SK-N-SH (cell line): ENCODE measurements at regions of chr12 and their contacts with region 1.

Region 1: DNA sequence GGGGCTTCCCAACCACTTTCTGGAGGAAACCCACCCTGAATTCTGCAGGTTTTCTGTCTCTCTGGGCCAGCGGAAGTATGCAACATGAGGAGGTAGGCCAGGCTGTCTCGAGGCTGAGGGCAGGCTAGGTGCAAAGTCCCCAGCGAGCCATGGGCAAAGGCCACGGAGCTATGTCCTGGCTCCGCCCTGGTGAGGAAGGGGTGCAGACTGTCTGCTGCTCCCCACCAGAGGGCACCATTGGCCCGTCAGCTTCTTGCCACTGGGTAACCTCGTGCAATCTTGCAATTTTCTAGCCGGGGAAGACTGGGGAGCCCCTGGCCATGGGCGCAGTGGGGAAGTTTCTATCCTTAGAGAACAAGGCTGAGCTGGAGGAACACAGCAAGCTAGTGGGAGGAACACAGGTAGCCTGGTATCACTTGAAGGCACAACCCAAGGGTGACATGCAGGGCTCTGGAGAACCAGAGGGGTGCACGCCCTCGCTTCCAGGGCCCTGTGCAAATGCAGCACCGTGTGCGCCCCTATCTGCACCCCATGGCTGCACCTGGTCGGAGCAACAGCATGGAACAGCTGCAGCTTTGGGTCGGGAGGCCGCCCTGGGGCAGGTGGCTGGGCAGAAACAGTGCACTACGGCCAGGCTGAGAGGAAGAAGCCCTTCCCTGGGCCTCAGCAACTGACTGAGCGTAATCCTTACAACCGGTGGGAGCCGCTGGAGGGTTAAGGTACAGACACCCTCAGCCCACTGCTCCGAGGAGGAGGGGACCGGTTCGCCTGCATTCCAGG is 27.6 kb upstream of the RPLP0 start:
- DNase-seq: peak; percentile 91
- H3K4me3 ChIP-seq: peak overlapping the region in 1 of 2 experiments; percentile 44; a peak in 1 of 4 replicates
- H3K27ac ChIP-seq: peak overlapping the region; percentile 95 to 100; a peak in 3 of 4 replicates
- H3K4me1 ChIP-seq: peaks cover 58 to 74% of the 10 kb centered on the region in 2 experiments
- H3K27me3 ChIP-seq: no peaks in the 10 kb centered on the region
- CTCF ChIP-seq: peak; percentile 90
- EP300 ChIP-seq: no peak
- RAD21 ChIP-seq: peak; percentile 97

Region 2: GRCh38 chr12:119925269-119925668 is 303.2 kb before region 1 on chr12:
- CTCF ChIA-PET with region 1: no interaction called
- POLR2A ChIA-PET with region 1: no interaction called
- DNase-seq: no peak
- H3K4me3 ChIP-seq: no peak overlapping the region
- H3K27ac ChIP-seq: no peak overlapping the region
- H3K4me1 ChIP-seq: no peaks in the 10 kb centered on the region
- H3K27me3 ChIP-seq: no peaks in the 10 kb centered on the region; the same call in 1 of the 2 replicates
- CTCF ChIP-seq: no peak
- EP300 ChIP-seq: no peak
- RAD21 ChIP-seq: no peak

Region 3: DNA sequence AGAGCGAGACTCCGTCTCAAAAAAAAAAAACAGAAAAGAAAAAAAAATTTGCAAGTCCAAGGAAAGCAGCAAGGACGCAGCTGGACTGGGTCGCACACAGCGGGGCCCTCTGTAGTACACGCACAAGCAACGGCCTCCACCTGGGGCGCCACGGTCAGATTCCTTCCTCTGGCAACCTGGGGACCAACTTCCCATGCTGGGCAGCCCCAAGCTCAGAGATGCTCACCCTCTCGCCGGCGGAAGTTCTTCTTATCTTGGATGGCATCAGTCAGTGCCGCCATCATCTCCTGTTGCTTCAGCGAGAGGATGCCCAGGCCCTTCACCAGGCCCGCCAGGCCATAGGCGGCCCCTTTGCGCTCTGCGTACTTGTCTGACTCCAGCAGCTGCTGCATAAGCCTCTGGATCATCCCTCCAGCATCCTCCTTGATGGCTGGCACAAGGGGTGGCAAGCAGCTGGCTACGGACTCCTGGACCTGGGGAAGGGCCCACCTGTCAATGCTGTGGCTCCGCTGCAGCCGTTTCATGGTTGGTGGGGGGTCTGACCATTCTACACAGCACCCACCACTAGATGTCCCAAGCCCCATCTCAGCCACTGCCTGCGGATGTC is 77.5 kb before region 1 on chr12:
- CTCF ChIA-PET with region 1: no interaction called
- POLR2A ChIA-PET with region 1: no interaction called
- DNase-seq: no peak
- H3K4me3 ChIP-seq: no peak overlapping the region
- H3K27ac ChIP-seq: no peak overlapping the region
- H3K4me1 ChIP-seq: no peaks in the 10 kb centered on the region
- H3K27me3 ChIP-seq: no peaks in the 10 kb centered on the region
- CTCF ChIP-seq: no peak
- EP300 ChIP-seq: no peak
- RAD21 ChIP-seq: no peak

Region 4: GRCh38 chr12:120216742-120217605 is 11.5 kb before region 1 on chr12:
- CTCF ChIA-PET with region 1: interaction called, 116 read pairs
- POLR2A ChIA-PET with region 1: interaction called, 7 read pairs
- DNase-seq: peak; percentile 62
- H3K4me3 ChIP-seq: no peak overlapping the region
- H3K27ac ChIP-seq: no peak overlapping the region
- H3K4me1 ChIP-seq: no peaks in the 10 kb centered on the region
- H3K27me3 ChIP-seq: no peaks in the 10 kb centered on the region
- CTCF ChIP-seq: no peak
- EP300 ChIP-seq: no peak
- RAD21 ChIP-seq: no peak

Region 5: GRCh38 chr12:120265473-120266179 is 37.1 kb after region 1 on chr12 and contains the start of gene PXN:
- CTCF ChIA-PET with region 1: interaction called, 618 read pairs
- POLR2A ChIA-PET with region 1: interaction called, 22 read pairs
- DNase-seq: peak; percentile 100
- H3K4me3 ChIP-seq: peak within 1 kb of the TSS; percentile 73 to 83
- H3K27ac ChIP-seq: peak within 1 kb of the TSS; percentile 51 to 57; a peak in 2 of 4 replicates
- H3K4me1 ChIP-seq: peaks cover 22 to 27% of the 10 kb centered on the region in 2 experiments; a peak in 3 of 4 replicates
- H3K27me3 ChIP-seq: no peaks in the 10 kb centered on the region
- CTCF ChIP-seq: peak; percentile 73
- EP300 ChIP-seq: no peak
- RAD21 ChIP-seq: peak; percentile 87
- polyA plus RNA-seq, gene PXN: 63.0 and 89.0 TPM in 2 replicates

Region 6: GRCh38 chr12:120286796-120287465 is 58.5 kb after region 1 on chr12:
- CTCF ChIA-PET with region 1: interaction called, 25 read pairs
- POLR2A ChIA-PET with region 1: interaction called, 108 read pairs
- DNase-seq: no peak
- H3K4me3 ChIP-seq: no peak overlapping the region
- H3K27ac ChIP-seq: no peak overlapping the region
- H3K4me1 ChIP-seq: peaks cover 0 to 2% of the 10 kb centered on the region in 2 experiments; a peak in 1 of 4 replicates
- H3K27me3 ChIP-seq: no peaks in the 10 kb centered on the region
- CTCF ChIP-seq: no peak
- EP300 ChIP-seq: no peak
- RAD21 ChIP-seq: no peak

Region 7: GRCh38 chr12:120301962-120302815 is 73.7 kb after region 1 on chr12 and contains the start of gene SIRT4:
- CTCF ChIA-PET with region 1: interaction called, 10 read pairs
- POLR2A ChIA-PET with region 1: interaction called, 3 read pairs
- DNase-seq: peak; percentile 91
- H3K4me3 ChIP-seq: peak within 1 kb of the TSS; percentile 54 to 85
- H3K27ac ChIP-seq: peak within 1 kb of the TSS; percentile 58 to 70
- H3K4me1 ChIP-seq: no peaks in the 10 kb centered on the region
- H3K27me3 ChIP-seq: no peaks in the 10 kb centered on the region
- CTCF ChIP-seq: peak; percentile 92
- EP300 ChIP-seq: peak in 1 of 2 experiments; percentile 32; a peak in 1 of 4 replicates
- RAD21 ChIP-seq: peak; percentile 36; the same call in 1 of the 2 replicates
- polyA plus RNA-seq, gene SIRT4: 1.1 and 1.4 TPM in 2 replicates